H1 (cell line): ENCODE measurements at regions of chr10 and their contacts with region 1.

Region 1: GRCh38 chr10:97888641-97889262 is 39.1 kb downstream of the GOLGA7B start:
- DNase-seq: peak in 1 of 2 experiments; percentile 36
- H3K4me3 ChIP-seq: peak overlapping the region in 1 of 4 experiments; percentile 40; a peak in 1 of 8 replicates
- H3K27ac ChIP-seq: no peak overlapping the region
- H3K4me1 ChIP-seq: peaks cover 0 to 18% (median 13%) of the 10 kb centered on the region in 4 experiments; a peak in 6 of 7 replicates
- H3K27me3 ChIP-seq: no peaks in the 10 kb centered on the region; a peak in 1 of 7 replicates
- CTCF ChIP-seq: peak in 1 of 3 experiments; percentile 3; a peak in 1 of 4 replicates
- EP300 ChIP-seq: no peak
- POLR2A ChIP-seq: no peak
- RAD21 ChIP-seq: no peak

Region 2: GRCh38 chr10:97875391-97875790 is 13.4 kb before region 1 on chr10:
- CTCF ChIA-PET with region 1: interaction called, 47 read pairs
- POLR2A ChIA-PET with region 1: interaction called, 7 read pairs
- DNase-seq: no peak
- H3K4me3 ChIP-seq: no peak overlapping the region
- H3K27ac ChIP-seq: no peak overlapping the region
- H3K4me1 ChIP-seq: peaks cover 2 to 9% (median 3%) of the 10 kb centered on the region in 4 experiments; a peak in 5 of 7 replicates
- H3K27me3 ChIP-seq: no peaks in the 10 kb centered on the region
- CTCF ChIP-seq: no peak
- EP300 ChIP-seq: no peak
- POLR2A ChIP-seq: no peak
- RAD21 ChIP-seq: no peak

Region 3: DNA sequence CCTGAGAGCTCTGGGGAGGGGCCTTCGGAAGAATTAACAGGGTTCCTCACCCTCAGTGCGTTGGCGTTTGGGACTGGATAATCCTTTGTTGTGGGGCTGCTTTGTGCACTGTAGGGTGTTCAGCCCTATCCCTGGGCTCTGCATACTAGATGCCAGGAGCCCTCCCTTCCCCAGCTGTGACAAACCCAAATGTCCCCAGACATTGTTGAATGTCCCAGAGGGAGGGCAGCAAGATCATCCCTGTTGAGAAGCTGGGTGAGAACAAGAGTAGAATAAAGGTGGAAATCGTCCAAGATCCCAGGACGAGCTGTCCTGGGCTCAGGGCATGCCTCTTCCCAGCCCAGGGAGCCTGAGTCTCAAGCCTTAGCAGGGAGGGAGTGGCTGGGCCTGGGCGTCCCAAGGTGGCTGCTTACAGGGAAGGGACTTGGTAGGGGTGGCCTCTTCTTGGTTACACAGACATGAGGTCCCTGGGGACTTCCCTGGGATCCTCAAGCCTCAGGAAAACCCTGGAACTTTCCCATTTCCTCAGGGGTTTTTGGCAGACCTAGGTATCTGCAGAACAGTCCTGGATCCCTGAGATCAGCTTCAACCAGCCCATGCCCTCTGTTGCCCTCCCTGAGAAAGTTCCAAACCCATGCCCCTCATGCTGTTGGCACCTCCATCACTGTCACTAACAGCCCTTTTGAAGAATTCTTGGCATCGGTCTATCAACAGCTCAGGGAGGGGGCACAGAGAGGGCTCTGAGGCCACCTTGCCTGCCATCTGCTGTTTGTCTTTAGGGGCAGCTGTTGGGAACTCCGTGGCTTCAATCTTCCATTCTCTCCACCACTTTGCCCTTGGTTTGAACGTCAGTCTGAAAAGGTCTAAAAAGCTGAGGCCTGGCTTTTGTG is 14.6 kb after region 1 on chr10:
- CTCF ChIA-PET with region 1: interaction called, 56 read pairs
- POLR2A ChIA-PET with region 1: interaction called, 3 read pairs
- DNase-seq: no peak
- H3K4me3 ChIP-seq: no peak overlapping the region
- H3K27ac ChIP-seq: no peak overlapping the region
- H3K4me1 ChIP-seq: peaks cover 0 to 4% (median 1%) of the 10 kb centered on the region in 4 experiments; a peak in 3 of 7 replicates
- H3K27me3 ChIP-seq: no peaks in the 10 kb centered on the region; a peak in 2 of 7 replicates
- CTCF ChIP-seq: peak in 1 of 3 experiments; percentile 12; a peak in 1 of 4 replicates
- EP300 ChIP-seq: no peak
- POLR2A ChIP-seq: no peak
- RAD21 ChIP-seq: peak in 1 of 2 experiments; percentile 43; a peak in 2 of 4 replicates

Region 4: DNA sequence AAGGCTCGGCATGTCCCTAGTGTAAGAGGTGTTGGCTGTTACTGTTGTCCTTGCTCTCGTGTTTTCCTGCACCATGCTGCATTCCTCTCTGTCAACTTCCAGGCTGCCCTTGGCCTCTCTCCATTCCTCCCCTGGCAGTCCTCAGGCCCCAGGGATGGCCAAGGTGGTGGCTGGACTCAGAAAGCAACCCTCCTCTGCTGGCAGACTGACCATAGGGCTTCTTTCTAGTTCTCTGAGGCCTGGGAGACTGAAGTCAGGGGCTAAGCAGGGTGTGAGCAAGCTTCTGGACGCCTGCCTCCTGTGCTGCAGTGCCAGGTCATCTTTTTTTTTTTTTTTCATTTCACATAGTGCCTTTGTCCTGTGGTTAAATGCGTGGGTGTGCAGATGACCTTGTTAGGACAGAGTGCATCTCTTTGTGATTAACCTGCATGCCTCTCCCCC is 32.8 kb after region 1 on chr10:
- CTCF ChIA-PET with region 1: no interaction called
- POLR2A ChIA-PET with region 1: no interaction called
- DNase-seq: no peak
- H3K4me3 ChIP-seq: no peak overlapping the region
- H3K27ac ChIP-seq: no peak overlapping the region
- H3K4me1 ChIP-seq: no peaks in the 10 kb centered on the region; a peak in 1 of 7 replicates
- H3K27me3 ChIP-seq: no peaks in the 10 kb centered on the region
- CTCF ChIP-seq: no peak
- EP300 ChIP-seq: no peak
- POLR2A ChIP-seq: no peak
- RAD21 ChIP-seq: no peak